ENCODE measurements at regions of chr9 and their contacts with region 1.

Region 1: DNA sequence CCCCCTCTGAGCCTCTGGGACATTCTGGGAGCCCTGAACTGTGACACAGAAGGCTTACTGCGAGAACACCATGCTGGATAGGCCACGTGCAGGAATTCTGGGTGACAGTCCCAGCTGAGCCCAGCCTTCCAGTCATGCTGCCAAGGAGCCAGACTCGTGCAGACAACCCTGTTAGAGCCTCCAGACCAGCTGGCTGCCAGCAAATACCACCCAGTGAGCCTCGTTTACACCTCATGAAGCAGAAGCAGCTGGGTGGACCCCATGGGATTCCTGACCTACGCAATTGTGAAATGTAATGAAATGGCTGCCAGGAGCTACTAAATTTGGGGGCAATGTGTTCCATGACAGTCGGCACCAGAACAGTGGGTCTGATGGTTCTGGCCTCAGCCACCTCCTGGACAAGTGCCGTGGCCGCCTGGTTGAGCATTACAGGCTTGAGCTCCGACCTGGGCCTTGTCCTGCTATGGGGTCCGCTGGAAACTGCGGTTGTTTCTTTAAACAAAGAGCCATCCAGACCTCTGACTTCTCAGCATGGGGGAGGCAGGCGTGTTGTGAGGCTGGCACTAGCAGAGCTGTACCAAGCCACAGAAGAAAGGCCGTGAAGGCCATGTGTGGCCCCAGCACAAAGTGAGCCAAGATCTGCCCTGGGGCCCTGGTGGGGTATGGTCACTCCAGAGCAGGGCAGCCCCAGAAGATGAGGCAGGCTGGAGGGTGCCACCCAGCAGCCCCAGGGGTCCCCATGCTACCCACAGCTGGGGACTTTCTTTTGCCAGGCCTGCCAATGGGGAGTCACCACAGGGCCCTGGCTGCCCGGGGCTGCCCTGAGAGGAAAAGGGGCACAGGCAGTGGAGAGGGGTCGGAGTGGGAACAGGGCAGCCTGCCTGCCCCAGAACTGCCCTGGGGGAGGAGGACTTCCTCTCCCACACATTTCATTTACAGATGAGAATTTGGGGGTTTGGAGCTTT is 19.3 kb upstream of the RXRA start:
- DNase-seq: peak; percentile 10
- ATAC-seq: peak in 1 of 2 donors; percentile 68

Region 2: DNA sequence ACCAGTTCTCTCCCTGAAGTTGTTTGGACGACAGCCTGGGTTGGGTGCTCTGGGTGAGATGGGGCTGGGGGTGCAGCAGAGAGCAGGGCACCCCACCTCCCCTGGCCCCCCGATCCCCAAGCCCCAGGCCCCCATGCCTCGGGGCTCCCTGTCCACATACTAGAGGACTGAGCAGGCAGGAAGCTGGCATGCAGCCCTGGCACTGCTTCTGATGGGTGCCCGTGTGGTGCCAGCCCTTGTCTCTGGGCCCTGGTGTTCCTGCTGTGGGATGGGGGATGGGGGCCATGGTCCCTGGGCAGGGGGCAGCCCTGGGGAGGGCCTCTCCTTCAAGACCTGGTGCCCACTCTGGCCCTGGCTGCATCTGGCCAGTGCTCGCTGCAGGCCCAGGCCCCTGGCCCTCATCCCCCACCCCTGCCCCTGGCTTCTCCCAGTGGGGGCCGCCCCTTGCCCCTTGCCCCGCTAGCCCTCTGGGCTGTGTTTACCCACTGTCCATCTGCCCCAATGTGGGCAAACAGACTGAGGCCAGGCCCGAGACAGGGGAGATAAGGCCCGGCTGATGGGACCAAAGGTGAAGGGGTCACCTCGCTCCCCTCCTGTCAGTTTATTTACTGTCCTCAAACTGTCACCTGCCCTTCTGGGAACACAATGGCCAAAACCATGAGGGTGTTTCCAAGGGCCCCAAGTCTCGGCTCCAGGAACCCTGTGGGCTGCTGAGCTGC is 47.9 kb before region 1 on chr9:
- intact Hi-C with region 1: loop called in 1 of 2 experiments (anchors 5 kb)
- DNase-seq: no peak
- ATAC-seq: peak; percentile 65 to 88

Measured in left cardiac atrium (tissue), 4 donors.